ENCODE measurements at regions of chr1 and their contacts with region 1.

Region 1: GRCh38 chr1:42576935-42577334 is 81.3 kb upstream of the PPIH start:
- DNase-seq: no peak
- ATAC-seq: no peak
- H3K4me3 ChIP-seq: no peak overlapping the region
- H3K27ac ChIP-seq: no peak overlapping the region
- H3K4me1 ChIP-seq: no peaks in the 10 kb centered on the region
- H3K27me3 ChIP-seq: no peaks in the 10 kb centered on the region
- CTCF ChIP-seq: no peak
- POLR2A ChIP-seq: no peak
- RAD21 ChIP-seq: no peak

Region 2: DNA sequence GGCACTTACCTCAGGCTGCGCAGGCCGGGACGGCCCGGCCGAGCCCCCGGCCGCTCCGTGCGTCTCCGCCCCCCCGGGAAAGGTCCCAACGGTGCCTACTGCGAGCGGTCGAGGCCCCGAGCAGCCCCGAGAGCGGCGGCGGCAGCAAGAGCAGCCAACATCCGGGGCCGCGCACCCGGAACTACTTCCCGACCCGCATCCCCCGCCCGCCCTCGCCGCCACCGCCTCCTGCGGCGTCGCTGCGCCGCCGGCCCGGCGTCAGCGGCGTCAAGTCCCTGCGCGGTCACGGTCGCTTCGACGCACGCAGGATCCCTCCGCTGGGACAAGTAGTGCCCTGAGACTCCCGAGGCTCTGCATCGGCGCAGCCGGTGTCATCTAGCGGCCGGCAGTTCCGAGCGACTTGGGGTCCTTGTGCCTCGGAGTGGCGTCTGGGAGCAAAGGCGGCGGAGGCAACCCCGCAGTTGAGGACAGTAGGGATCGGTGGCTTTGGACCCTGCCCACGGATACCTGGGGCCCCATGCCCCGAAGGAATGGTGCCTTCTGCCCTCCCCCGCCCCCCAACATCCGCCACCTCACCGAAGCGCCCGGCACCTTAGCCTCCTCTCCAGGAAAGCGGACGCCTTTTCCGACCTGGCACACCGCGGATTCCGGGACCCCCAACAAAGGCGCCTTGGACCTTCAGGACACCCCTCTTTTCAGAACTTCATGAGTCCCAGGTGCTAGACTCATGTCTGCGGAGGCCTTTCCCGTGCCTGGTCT is 241.7 kb before region 1 on chr1 and contains the start of gene FOXJ3:
- CTCF ChIA-PET with region 1: no interaction called
- POLR2A ChIA-PET with region 1: no interaction called
- RAD21 ChIA-PET with region 1: no interaction called
- intact Hi-C with region 1: loop called (anchors 10 kb)
- DNase-seq: peak; percentile 96
- ATAC-seq: peak; percentile 84
- H3K4me3 ChIP-seq: peak within 1 kb of the TSS; percentile 64 to 95
- H3K27ac ChIP-seq: peak within 1 kb of the TSS; percentile 85
- H3K4me1 ChIP-seq: peaks cover 0 to 19% of the 10 kb centered on the region in 2 experiments; a peak in 3 of 4 replicates
- H3K27me3 ChIP-seq: no peaks in the 10 kb centered on the region
- CTCF ChIP-seq: no peak
- POLR2A ChIP-seq: peak; percentile 75
- RAD21 ChIP-seq: 0 out of 2 replicates have a peak, but pooled peaks have one; percentile 8
- total RNA-seq, gene FOXJ3: 51.1 TPM

Region 3: DNA sequence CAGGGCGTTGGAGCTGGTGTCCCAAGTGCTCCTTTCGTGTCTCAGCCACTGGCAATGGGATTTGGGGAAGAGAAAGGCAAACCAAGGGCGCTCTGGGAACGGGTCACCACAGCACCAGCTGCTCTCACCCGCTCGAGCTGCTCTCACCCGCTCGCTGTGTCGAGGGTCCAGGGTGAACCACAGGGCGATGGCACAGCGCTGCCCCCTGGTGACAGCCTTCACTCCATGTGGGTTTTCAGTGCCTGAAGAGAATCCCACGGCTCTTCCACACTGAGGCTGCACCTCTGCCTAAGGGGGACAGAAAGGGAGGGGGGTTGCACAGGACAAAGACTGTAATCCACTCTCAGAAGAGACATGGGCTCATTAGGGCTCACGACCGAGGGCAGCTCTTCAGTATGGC is 170.2 kb after region 1 on chr1:
- CTCF ChIA-PET with region 1: interaction called, 12 read pairs
- POLR2A ChIA-PET with region 1: no interaction called
- RAD21 ChIA-PET with region 1: no interaction called
- intact Hi-C with region 1: loop called (anchors 2 kb)
- DNase-seq: no peak
- ATAC-seq: peak; percentile 81
- H3K4me3 ChIP-seq: no peak overlapping the region
- H3K27ac ChIP-seq: no peak overlapping the region
- H3K4me1 ChIP-seq: no peaks in the 10 kb centered on the region
- H3K27me3 ChIP-seq: no peaks in the 10 kb centered on the region
- CTCF ChIP-seq: peak; percentile 48 to 79 (median 74); a peak in 5 of 6 replicates
- POLR2A ChIP-seq: no peak
- RAD21 ChIP-seq: peak; percentile 75

Region 4: GRCh38 chr1:42766741-42767509 is 190.0 kb after region 1 on chr1 and contains the starts of genes C1orf50 and P3H1:
- CTCF ChIA-PET with region 1: interaction called, 10 read pairs
- POLR2A ChIA-PET with region 1: no interaction called
- RAD21 ChIA-PET with region 1: no interaction called
- intact Hi-C with region 1: no loop called
- DNase-seq: peak; percentile 96
- ATAC-seq: peak; percentile 92
- H3K4me3 ChIP-seq: peak within 1 kb of the TSS; percentile 76 to 84
- H3K27ac ChIP-seq: peak within 1 kb of the TSS; percentile 70
- H3K4me1 ChIP-seq: peaks cover 11 to 18% of the 10 kb centered on the region in 2 experiments; a peak in 3 of 4 replicates
- H3K27me3 ChIP-seq: no peaks in the 10 kb centered on the region
- CTCF ChIP-seq: no peak
- POLR2A ChIP-seq: peak; percentile 86
- RAD21 ChIP-seq: no peak
- total RNA-seq, gene C1orf50: 5.8 TPM
- total RNA-seq, gene P3H1: 32.9 TPM